ENCODE measurements at regions of chr13 and their contacts with region 1.

Region 1: GRCh38 chr13:29850224-29850898 is at the start of gene UBL3:
- DNase-seq: peak; percentile 85
- ATAC-seq: peak; percentile 88
- H3K4me3 ChIP-seq: peak within 1 kb of the TSS; percentile 69 to 74
- H3K27ac ChIP-seq: peak within 1 kb of the TSS; percentile 82
- H3K4me1 ChIP-seq: peaks cover 0 to 12% of the 10 kb centered on the region in 2 experiments; a peak in 3 of 4 replicates
- H3K27me3 ChIP-seq: no peaks in the 10 kb centered on the region
- CTCF ChIP-seq: no peak
- POLR2A ChIP-seq: peak; percentile 29
- RAD21 ChIP-seq: no peak
- total RNA-seq, gene UBL3: 10.7 TPM

Region 2: GRCh38 chr13:29595380-29596063 is 254.8 kb before region 1 on chr13 and contains the start of gene SLC7A1:
- CTCF ChIA-PET with region 1: no interaction called
- POLR2A ChIA-PET with region 1: no interaction called
- RAD21 ChIA-PET with region 1: no interaction called
- intact Hi-C with region 1: loop called (anchors 10 kb)
- DNase-seq: peak; percentile 59
- ATAC-seq: peak; percentile 91
- H3K4me3 ChIP-seq: peak within 1 kb of the TSS; percentile 72 to 82
- H3K27ac ChIP-seq: peak within 1 kb of the TSS; percentile 95
- H3K4me1 ChIP-seq: peaks cover 8 to 21% of the 10 kb centered on the region in 2 experiments
- H3K27me3 ChIP-seq: no peaks in the 10 kb centered on the region
- CTCF ChIP-seq: no peak
- POLR2A ChIP-seq: no peak
- RAD21 ChIP-seq: no peak
- total RNA-seq, gene SLC7A1: 124 TPM

Region 3: DNA sequence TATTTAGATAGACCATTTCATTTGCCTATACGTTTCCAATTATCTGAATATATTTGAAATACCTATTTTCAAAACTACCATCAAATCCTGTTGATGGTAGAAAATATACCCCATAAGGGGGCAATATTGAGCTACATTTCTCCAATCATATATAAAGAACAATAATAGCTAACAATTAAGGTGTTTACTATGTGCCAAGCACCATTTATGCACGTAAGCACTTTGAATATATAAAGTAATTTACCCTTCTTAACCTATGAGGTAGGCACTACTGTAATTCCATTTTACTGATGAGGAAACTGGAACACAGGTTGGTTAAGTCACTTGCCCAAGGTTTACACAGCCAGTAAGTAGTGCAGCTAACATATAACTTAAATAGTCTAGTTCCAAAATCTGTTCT is 79.1 kb before region 1 on chr13:
- CTCF ChIA-PET with region 1: interaction called, 10 read pairs
- POLR2A ChIA-PET with region 1: no interaction called
- RAD21 ChIA-PET with region 1: no interaction called
- intact Hi-C with region 1: no loop called
- DNase-seq: peak; percentile 37
- ATAC-seq: 0 out of 2 replicates have a peak, but pooled peaks have one; percentile 59
- H3K4me3 ChIP-seq: no peak overlapping the region
- H3K27ac ChIP-seq: no peak overlapping the region
- H3K4me1 ChIP-seq: no peaks in the 10 kb centered on the region
- H3K27me3 ChIP-seq: no peaks in the 10 kb centered on the region
- CTCF ChIP-seq: peak; percentile 36 to 63 (median 56); a peak in 4 of 6 replicates
- POLR2A ChIP-seq: no peak
- RAD21 ChIP-seq: peak; percentile 69

Region 4: DNA sequence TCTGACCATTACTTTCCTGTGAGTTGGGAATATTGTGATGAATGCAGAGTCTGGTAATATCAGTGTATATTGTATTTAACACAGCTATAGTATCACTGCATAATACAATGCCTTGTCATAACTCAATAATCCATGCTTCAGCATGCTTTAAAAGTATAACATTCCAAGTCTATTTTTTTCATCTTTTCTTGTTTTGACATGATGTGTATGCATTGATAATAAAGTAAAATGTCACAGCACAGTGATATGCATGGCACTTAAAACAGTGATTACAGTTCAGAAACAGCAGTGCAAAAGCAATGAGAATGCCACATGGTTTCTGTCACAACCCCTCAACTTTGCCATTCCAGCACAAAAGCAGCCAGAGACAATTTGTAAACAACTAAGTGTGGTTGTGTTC is 439.2 kb after region 1 on chr13:
- CTCF ChIA-PET with region 1: no interaction called
- POLR2A ChIA-PET with region 1: no interaction called
- RAD21 ChIA-PET with region 1: no interaction called
- intact Hi-C with region 1: no loop called
- DNase-seq: no peak
- ATAC-seq: no peak
- H3K4me3 ChIP-seq: no peak overlapping the region
- H3K27ac ChIP-seq: no peak overlapping the region
- H3K4me1 ChIP-seq: peaks cover 5 to 15% of the 10 kb centered on the region in 2 experiments; a peak in 2 of 4 replicates
- H3K27me3 ChIP-seq: no peaks in the 10 kb centered on the region
- CTCF ChIP-seq: no peak
- POLR2A ChIP-seq: no peak
- RAD21 ChIP-seq: no peak